Posterior vena cava (tissue), 2 donors: ENCODE measurements at regions of chr1 and their contacts with region 1.

Region 1: DNA sequence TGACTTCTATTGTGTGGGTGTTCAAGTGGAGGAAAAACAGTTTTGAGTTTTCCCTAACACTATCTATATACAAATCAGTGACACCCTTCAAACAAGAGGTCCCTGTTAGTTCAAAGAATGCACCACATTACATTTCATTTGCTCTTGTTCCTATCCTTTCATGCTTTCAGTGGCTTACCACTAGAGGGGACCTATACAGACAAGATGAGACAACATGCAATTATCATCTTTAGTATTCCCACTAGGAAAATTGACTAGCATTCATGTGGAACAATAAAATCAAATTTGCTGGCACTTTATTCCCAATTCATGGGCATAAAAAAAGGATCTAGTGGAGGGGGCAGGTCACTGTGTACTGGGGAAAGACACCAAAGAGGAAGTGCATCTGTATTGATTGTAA is 13.3 kb upstream of the SIPA1L2 start:
- DNase-seq: no peak

Region 2: GRCh38 chr1:232184561-232185530 is 458.4 kb before region 1 on chr1:
- intact Hi-C with region 1: loop called in 1 of 2 experiments (anchors 5 kb)
- DNase-seq: no peak

Region 3: DNA sequence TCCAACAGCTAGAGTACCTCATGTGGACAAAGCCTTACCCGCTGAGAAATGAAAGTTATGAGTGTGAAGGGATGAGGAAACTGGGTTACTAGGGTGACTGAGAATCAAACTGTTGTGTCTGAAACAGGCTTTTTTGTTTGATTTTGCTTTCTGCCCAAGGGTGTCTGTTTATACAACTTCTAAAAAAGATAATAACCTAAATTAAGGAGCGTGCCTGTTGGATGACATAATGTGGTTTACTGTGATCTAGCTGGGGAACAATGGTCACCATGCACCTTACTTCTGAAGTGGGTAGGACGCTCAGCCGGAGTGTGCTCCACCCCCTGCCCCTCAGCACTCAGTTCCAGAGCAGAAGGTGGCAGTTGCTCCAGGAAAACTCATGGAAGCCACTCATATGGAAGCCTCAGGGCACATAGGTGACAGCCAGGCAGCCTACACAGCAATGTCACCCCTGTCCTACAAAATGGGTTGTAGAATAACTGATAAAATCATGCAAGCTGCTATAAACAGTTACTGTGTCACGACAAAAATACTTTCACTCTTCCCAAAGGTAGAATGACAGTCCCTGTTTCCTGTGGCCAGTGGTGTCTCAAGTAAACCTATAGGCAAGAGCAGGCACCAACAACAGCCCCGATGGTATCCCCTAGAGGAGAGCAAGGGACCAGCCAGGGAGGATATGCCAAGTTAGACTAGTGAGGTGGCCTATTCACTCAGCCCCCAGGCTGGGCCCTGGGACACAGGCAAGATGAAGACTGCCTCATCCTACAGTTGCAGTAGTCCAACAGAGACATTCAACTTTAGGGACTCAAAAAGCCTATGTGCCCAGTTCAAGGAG is 42.6 kb before region 1 on chr1:
- intact Hi-C with region 1: no loop called
- DNase-seq: no peak

Region 4: DNA sequence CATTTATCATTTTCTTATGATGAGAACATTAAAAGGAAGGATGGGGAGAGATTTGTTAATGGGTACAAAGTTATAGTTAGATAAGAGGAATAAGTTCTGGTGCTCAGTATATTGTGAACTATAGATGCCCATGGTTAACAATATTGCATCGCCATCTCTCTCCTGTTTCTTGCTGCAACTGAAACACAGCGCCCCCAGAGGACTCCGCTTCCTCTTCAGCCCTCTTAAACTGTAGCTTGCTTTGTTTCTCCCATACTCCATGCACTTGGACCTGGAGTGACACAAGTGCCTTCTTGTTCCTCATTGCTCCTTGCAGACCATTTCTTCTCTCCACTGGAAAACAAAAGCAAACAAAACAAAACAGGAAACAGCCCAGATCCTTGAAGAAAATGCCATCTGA is 237.1 kb after region 1 on chr1:
- intact Hi-C with region 1: loop called in 1 of 2 experiments (anchors 10 kb)
- DNase-seq: no peak